A673 (cell line): ENCODE measurements at regions of chr17 and their contacts with region 1.

Region 1: GRCh38 chr17:46940621-46941404 is 17.9 kb downstream of the GOSR2 start:
- DNase-seq: peak; percentile 64
- H3K4me3 ChIP-seq: no peak overlapping the region
- H3K27ac ChIP-seq: peak overlapping the region; percentile 23
- H3K4me1 ChIP-seq: peaks cover 7% of the 10 kb centered on the region
- H3K27me3 ChIP-seq: no peaks in the 10 kb centered on the region
- CTCF ChIP-seq: peak; percentile 71

Region 2: GRCh38 chr17:46841561-46842379 is 99.0 kb before region 1 on chr17:
- CTCF ChIA-PET with region 1: interaction called, 3 read pairs
- POLR2A ChIA-PET with region 1: no interaction called
- intact Hi-C with region 1: loop called (anchors 2 kb)
- DNase-seq: peak; percentile 24
- H3K4me3 ChIP-seq: peak overlapping the region; percentile 31
- H3K27ac ChIP-seq: no peak overlapping the region
- H3K4me1 ChIP-seq: no peaks in the 10 kb centered on the region
- H3K27me3 ChIP-seq: peaks cover 8% of the 10 kb centered on the region
- CTCF ChIP-seq: peak; percentile 63

Region 3: GRCh38 chr17:46995841-46996571 is 55.2 kb after region 1 on chr17:
- CTCF ChIA-PET with region 1: no interaction called
- POLR2A ChIA-PET with region 1: no interaction called
- intact Hi-C with region 1: loop called (anchors 1 kb)
- DNase-seq: no peak
- H3K4me3 ChIP-seq: no peak overlapping the region
- H3K27ac ChIP-seq: no peak overlapping the region
- H3K4me1 ChIP-seq: no peaks in the 10 kb centered on the region
- H3K27me3 ChIP-seq: no peaks in the 10 kb centered on the region
- CTCF ChIP-seq: no peak

Region 4: DNA sequence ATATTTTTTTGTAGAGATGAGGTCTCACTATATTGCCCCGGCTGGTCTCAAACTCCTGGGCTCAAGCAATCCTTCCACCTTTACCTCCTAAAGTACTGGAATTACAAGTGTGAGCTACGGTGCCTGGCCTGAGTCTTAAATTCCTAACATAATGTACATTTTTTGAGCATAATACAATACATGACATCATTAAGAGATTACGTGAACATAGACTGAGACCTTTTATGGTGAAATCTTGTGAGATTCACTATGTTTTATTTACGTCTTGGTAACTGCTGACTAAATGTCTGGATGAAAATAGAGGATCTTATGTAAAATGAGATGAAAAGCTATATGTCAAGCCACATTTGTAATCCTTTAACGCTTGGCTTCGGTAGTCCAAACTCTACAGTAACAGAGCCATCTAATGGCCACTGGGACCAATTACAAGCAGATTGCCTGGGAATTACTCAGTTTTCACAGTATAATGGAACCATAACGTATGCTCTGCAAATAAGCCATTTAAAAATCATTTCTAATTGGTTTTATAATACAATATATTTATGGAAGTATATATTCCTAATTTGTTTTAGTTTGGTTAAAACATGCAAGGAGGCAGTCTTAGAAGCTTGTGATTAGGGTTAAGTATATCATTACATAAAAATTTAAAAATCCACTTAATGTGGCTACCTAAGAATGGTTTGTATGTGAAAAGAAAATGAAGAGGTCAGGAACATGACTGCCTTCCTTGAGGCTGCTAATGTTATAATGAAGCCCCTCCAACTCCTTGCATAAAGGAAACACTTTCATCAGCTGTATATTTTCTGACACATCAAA is 374.8 kb after region 1 on chr17:
- CTCF ChIA-PET with region 1: interaction called, 3 read pairs
- POLR2A ChIA-PET with region 1: no interaction called
- intact Hi-C with region 1: loop called (anchors 5 kb)
- DNase-seq: peak; percentile 67
- H3K4me3 ChIP-seq: no peak overlapping the region
- H3K27ac ChIP-seq: no peak overlapping the region
- H3K4me1 ChIP-seq: no peaks in the 10 kb centered on the region
- H3K27me3 ChIP-seq: no peaks in the 10 kb centered on the region
- CTCF ChIP-seq: peak; percentile 73